ENCODE measurements at regions of chr5 and their contacts with region 1.

Region 1: GRCh38 chr5:33713136-33713765 is 178.5 kb downstream of the ADAMTS12 start:
- DNase-seq: no peak
- H3K4me3 ChIP-seq: no peak overlapping the region
- H3K27ac ChIP-seq: no peak overlapping the region
- H3K4me1 ChIP-seq: no peaks in the 10 kb centered on the region
- CTCF ChIP-seq: no peak

Region 2: DNA sequence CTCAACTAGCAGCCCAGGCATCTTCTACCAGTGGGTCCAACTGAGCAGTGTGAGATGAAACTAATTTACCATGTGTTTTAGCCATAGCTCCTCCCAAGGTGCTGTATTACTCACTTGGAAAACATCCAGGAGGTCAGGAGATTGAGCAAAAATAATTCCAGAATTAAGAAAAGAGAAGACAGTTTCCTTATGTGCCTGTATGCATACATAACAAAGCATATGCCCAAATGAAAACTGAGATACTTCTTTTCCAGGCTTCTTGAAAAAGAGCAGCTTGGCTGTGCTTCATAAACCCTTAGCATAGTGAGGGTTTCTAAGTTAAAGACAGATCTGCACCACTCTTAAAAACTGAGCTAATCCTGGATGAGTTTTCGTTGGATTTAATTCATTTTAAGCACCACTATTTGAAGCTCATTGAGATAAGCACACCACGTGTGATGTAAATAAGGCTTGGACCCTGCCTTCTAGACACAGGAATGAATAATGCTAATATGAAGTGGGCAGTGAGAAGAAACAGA is 59.2 kb after region 1 on chr5:
- CTCF ChIA-PET with region 1: no interaction called
- POLR2A ChIA-PET with region 1: no interaction called
- intact Hi-C with region 1: loop called (anchors 10 kb)
- DNase-seq: no peak
- H3K4me3 ChIP-seq: no peak overlapping the region
- H3K27ac ChIP-seq: no peak overlapping the region
- H3K4me1 ChIP-seq: no peaks in the 10 kb centered on the region
- CTCF ChIP-seq: no peak

Measured in OCI-LY7 (cell line).